CD4-positive, alpha-beta T cell (primary cell): ENCODE measurements at regions of chr1 and their contacts with region 1.

Region 1: GRCh38 chr1:161071886-161072371 is 2.2 kb upstream of the ARHGAP30 start:
- DNase-seq: peak in 13 of 14 experiments; percentile 29 to 78 (median 42)
- ATAC-seq: no peak
- H3K4me3 ChIP-seq: no peak overlapping the region
- H3K4me3 Mint-ChIP-seq: no peak overlapping the region
- H3K27ac ChIP-seq: no peak overlapping the region
- H3K27ac Mint-ChIP-seq: peak overlapping the region; percentile 90
- H3K4me1 ChIP-seq: peaks cover 45% of the 10 kb centered on the region
- H3K4me1 Mint-ChIP-seq: peaks cover 51% of the 10 kb centered on the region
- H3K27me3 ChIP-seq: no peaks in the 10 kb centered on the region
- H3K27me3 Mint-ChIP-seq: no peaks in the 10 kb centered on the region
- CTCF ChIP-seq: peak; percentile 59

Region 2: DNA sequence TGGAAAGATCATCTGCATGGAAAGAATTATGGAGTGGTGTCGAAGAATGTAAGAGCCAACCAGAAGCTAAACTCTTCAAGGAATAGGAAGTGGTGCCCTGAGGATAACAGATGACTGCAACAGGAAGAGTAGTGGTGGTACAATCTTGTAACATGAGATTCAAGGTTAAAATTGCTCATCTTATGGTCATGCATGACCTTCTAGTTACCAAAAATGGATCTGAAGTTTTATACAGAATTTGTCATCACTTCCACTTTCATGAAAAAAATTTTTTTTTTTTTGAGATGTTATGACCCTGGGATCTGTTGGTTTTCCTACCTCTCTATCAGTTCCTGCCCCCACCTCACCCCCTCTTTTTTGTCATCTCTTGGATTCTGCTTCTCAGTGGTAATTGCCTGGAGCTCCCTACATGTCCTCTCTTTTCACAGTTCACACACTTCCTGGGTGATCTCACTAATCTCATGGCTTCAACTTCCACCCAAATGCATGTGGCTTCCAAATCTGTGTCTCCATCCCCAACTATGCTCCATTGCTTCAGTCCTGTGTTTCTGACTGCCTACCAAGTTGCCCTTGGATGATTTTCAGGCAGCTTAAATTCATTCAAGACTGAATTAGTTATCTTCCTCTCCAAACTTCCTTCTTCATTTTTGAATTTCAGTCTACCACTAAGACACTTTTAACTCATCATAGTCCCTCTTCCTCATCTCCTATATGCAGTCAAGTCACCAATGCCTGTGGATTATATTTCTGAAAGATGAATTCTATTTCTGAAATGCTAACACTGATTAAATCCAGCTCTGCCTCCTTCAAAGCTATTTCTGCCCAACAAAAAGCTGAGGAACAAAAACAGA is 597.3 kb before region 1 on chr1:
- CTCF ChIA-PET with region 1: no interaction called
- POLR2A ChIA-PET with region 1: no interaction called
- intact Hi-C with region 1: no loop called
- DNase-seq: no peak
- ATAC-seq: no peak
- H3K4me3 ChIP-seq: no peak overlapping the region
- H3K4me3 Mint-ChIP-seq: no peak overlapping the region
- H3K27ac ChIP-seq: no peak overlapping the region
- H3K27ac Mint-ChIP-seq: no peak overlapping the region
- H3K4me1 ChIP-seq: peaks cover 3% of the 10 kb centered on the region
- H3K4me1 Mint-ChIP-seq: peaks cover 10% of the 10 kb centered on the region
- H3K27me3 ChIP-seq: no peaks in the 10 kb centered on the region
- H3K27me3 Mint-ChIP-seq: no peaks in the 10 kb centered on the region
- CTCF ChIP-seq: no peak

Region 3: GRCh38 chr1:161038523-161039153 is 33.3 kb before region 1 on chr1 and contains the start of gene TSTD1:
- CTCF ChIA-PET with region 1: interaction called, 20 read pairs
- POLR2A ChIA-PET with region 1: interaction called, 66 read pairs
- intact Hi-C with region 1: loop called in 1 of 2 experiments (anchors 1 kb)
- DNase-seq: peak; percentile 75 to 96 (median 84)
- ATAC-seq: peak; percentile 89
- H3K4me3 ChIP-seq: peak within 1 kb of the TSS; percentile 99
- H3K4me3 Mint-ChIP-seq: peak within 1 kb of the TSS; percentile 88
- H3K27ac ChIP-seq: peak within 1 kb of the TSS; percentile 86 to 88
- H3K27ac Mint-ChIP-seq: peak within 1 kb of the TSS; percentile 91
- H3K4me1 ChIP-seq: peaks cover 50% of the 10 kb centered on the region
- H3K4me1 Mint-ChIP-seq: peaks cover 41% of the 10 kb centered on the region
- H3K27me3 ChIP-seq: no peaks in the 10 kb centered on the region
- H3K27me3 Mint-ChIP-seq: no peaks in the 10 kb centered on the region
- CTCF ChIP-seq: no peak
- total RNA-seq, gene TSTD1: 38.0 to 40.3 TPM

Region 4: GRCh38 chr1:161054805-161055204 is 17.1 kb before region 1 on chr1:
- CTCF ChIA-PET with region 1: interaction called, 7 read pairs
- POLR2A ChIA-PET with region 1: interaction called, 295 read pairs
- intact Hi-C with region 1: no loop called
- DNase-seq: peak in 1 of 14 experiments; percentile 33
- ATAC-seq: no peak
- H3K4me3 ChIP-seq: no peak overlapping the region
- H3K4me3 Mint-ChIP-seq: no peak overlapping the region
- H3K27ac ChIP-seq: peak overlapping the region in 1 of 2 donors; percentile 21
- H3K27ac Mint-ChIP-seq: no peak overlapping the region
- H3K4me1 ChIP-seq: peaks cover 35% of the 10 kb centered on the region
- H3K4me1 Mint-ChIP-seq: peaks cover 27% of the 10 kb centered on the region
- H3K27me3 ChIP-seq: no peaks in the 10 kb centered on the region
- H3K27me3 Mint-ChIP-seq: no peaks in the 10 kb centered on the region
- CTCF ChIP-seq: peak; percentile 32

Region 5: GRCh38 chr1:161098210-161099068 is 26.5 kb after region 1 on chr1 and contains the start of gene KLHDC9:
- CTCF ChIA-PET with region 1: interaction called, 36 read pairs
- POLR2A ChIA-PET with region 1: interaction called, 79 read pairs
- intact Hi-C with region 1: loop called (anchors 1 to 2 kb)
- DNase-seq: peak; percentile 38 to 88 (median 58)
- ATAC-seq: peak; percentile 50
- H3K4me3 ChIP-seq: peak within 1 kb of the TSS; percentile 51
- H3K4me3 Mint-ChIP-seq: peak within 1 kb of the TSS; percentile 87
- H3K27ac ChIP-seq: peak within 1 kb of the TSS in 1 of 2 donors; percentile 52
- H3K27ac Mint-ChIP-seq: peak within 1 kb of the TSS; percentile 90
- H3K4me1 ChIP-seq: peaks cover 22% of the 10 kb centered on the region
- H3K4me1 Mint-ChIP-seq: peaks cover 23% of the 10 kb centered on the region
- H3K27me3 ChIP-seq: no peaks in the 10 kb centered on the region
- H3K27me3 Mint-ChIP-seq: peaks cover 6% of the 10 kb centered on the region
- CTCF ChIP-seq: peak; percentile 29
- total RNA-seq, gene KLHDC9: 0.41 TPM in 1 of 2 experiments, not detected in the other

Region 6: GRCh38 chr1:161132410-161133219 is 60.7 kb after region 1 on chr1 and contains the start of gene DEDD:
- CTCF ChIA-PET with region 1: interaction called, 3 read pairs
- POLR2A ChIA-PET with region 1: interaction called, 17 read pairs
- intact Hi-C with region 1: no loop called
- DNase-seq: peak; percentile 80 to 97 (median 86)
- ATAC-seq: peak; percentile 95
- H3K4me3 ChIP-seq: peak within 1 kb of the TSS; percentile 98
- H3K4me3 Mint-ChIP-seq: no peak within 1 kb of the TSS
- H3K27ac ChIP-seq: peak within 1 kb of the TSS; percentile 79 to 94
- H3K27ac Mint-ChIP-seq: no peak within 1 kb of the TSS
- H3K4me1 ChIP-seq: peaks cover 46% of the 10 kb centered on the region
- H3K4me1 Mint-ChIP-seq: peaks cover 41% of the 10 kb centered on the region
- H3K27me3 ChIP-seq: no peaks in the 10 kb centered on the region
- H3K27me3 Mint-ChIP-seq: no peaks in the 10 kb centered on the region
- CTCF ChIP-seq: no peak
- total RNA-seq, gene DEDD: 35.5 to 36.6 TPM

Region 7: GRCh38 chr1:161159087-161159912 is 87.4 kb after region 1 on chr1 and contains the start of gene USP21:
- CTCF ChIA-PET with region 1: interaction called, 4 read pairs
- POLR2A ChIA-PET with region 1: interaction called, 13 read pairs
- intact Hi-C with region 1: loop called in 1 of 2 experiments (anchors 5 kb)
- DNase-seq: peak; percentile 89 to 96 (median 90)
- ATAC-seq: peak; percentile 97
- H3K4me3 ChIP-seq: peak within 1 kb of the TSS; percentile 98
- H3K4me3 Mint-ChIP-seq: peak within 1 kb of the TSS; percentile 93
- H3K27ac ChIP-seq: peak within 1 kb of the TSS; percentile 70 to 91
- H3K27ac Mint-ChIP-seq: peak within 1 kb of the TSS; percentile 86
- H3K4me1 ChIP-seq: peaks cover 44% of the 10 kb centered on the region
- H3K4me1 Mint-ChIP-seq: peaks cover 80% of the 10 kb centered on the region
- H3K27me3 ChIP-seq: no peaks in the 10 kb centered on the region
- H3K27me3 Mint-ChIP-seq: no peaks in the 10 kb centered on the region
- CTCF ChIP-seq: no peak
- total RNA-seq, gene USP21: 44.4 to 45.6 TPM

Region 8: DNA sequence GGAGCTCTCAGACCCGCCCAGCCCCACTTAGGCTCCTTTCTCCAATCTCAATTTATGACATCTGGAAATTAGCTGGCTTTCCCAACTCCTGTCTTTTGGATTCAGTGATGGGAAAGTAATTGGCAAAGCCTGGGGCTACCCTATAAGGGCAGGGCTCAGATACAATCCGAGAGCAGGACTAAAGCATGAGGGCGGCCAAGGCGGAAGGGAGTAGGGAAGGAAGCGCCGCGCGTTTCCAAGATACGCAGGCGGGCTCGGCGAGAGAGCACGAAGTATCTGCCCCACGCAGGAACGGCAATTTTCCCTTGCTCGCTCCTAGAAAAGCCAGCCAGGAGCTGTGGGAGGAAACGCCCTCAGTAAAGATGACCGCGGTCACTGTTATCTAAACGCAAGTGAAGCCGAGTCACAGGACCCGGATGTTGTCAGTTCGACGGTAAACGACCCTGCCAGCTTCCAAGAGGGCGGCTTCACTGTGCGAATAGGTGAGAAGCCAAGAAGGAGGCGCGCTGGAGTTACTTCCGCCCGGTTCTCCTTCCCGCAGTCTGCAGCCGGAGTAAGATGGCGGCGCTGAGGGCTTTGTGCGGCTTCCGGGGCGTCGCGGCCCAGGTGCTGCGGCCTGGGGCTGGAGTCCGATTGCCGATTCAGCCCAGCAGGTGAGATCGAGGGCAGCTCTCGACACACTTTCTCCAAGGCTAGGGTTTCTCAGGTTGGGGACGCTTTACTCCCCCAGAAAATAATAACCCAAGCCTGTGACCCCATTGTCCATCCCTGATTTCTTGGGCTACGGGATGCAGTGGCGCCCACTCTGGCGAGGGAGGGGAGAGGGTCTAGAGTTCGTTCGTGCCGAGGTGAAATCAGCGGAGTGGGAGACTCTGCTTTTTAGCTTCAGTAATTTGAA is 130.1 kb after region 1 on chr1 and contains the start of gene NDUFS2:
- CTCF ChIA-PET with region 1: no interaction called
- POLR2A ChIA-PET with region 1: interaction called, 18 read pairs
- intact Hi-C with region 1: no loop called
- DNase-seq: peak; percentile 90 to 99 (median 94)
- ATAC-seq: peak; percentile 99
- H3K4me3 ChIP-seq: peak within 1 kb of the TSS; percentile 66
- H3K4me3 Mint-ChIP-seq: peak within 1 kb of the TSS; percentile 99
- H3K27ac ChIP-seq: peak within 1 kb of the TSS; percentile 85 to 86
- H3K27ac Mint-ChIP-seq: peak within 1 kb of the TSS; percentile 95
- H3K4me1 ChIP-seq: peaks cover 47% of the 10 kb centered on the region
- H3K4me1 Mint-ChIP-seq: peaks cover 66% of the 10 kb centered on the region
- H3K27me3 ChIP-seq: no peaks in the 10 kb centered on the region
- H3K27me3 Mint-ChIP-seq: no peaks in the 10 kb centered on the region
- CTCF ChIP-seq: no peak
- total RNA-seq, gene NDUFS2: 49.9 to 55.7 TPM